CD4-positive, alpha-beta T cell (primary cell): ENCODE measurements at regions of chr12 and their contacts with region 1.

Region 1: DNA sequence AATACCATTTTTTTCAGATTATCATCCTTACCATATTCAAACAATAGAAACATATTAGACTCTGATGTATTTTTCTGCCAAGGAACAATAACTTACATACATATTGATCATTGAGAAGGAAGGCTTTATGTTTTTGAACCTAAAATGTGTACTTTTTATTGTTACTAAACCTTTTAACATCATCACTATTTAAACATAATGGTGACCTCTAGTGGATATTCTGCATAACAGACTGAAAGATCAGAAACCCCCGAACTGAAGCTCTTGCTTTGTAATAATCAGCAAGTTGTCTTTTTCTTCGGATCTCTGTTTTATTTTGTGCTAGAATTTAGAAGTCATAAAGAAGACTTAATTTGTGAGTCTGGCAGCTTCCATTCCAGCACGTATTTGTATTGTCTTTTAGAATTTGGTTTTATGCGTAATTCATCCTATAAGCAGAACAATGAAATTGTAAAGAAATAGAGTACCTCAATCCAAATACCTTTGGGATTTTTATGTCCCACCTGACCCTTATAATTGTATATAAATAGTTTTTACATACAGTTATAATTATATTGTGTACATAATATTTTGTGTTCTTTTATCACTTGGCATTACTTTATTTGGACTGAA is 125.9 kb upstream of the ATF1 start:
- DNase-seq: peak in 3 of 14 experiments; percentile 65 to 66 (median 65)
- ATAC-seq: peak; percentile 82
- H3K4me3 ChIP-seq: no peak overlapping the region
- H3K4me3 Mint-ChIP-seq: no peak overlapping the region
- H3K27ac ChIP-seq: peak overlapping the region in 1 of 2 donors; percentile 14
- H3K27ac Mint-ChIP-seq: peak overlapping the region; percentile 34
- H3K4me1 ChIP-seq: no peaks in the 10 kb centered on the region
- H3K4me1 Mint-ChIP-seq: peaks cover 43% of the 10 kb centered on the region
- H3K27me3 ChIP-seq: no peaks in the 10 kb centered on the region
- H3K27me3 Mint-ChIP-seq: no peaks in the 10 kb centered on the region
- CTCF ChIP-seq: peak; percentile 70

Region 2: GRCh38 chr12:50211392-50212070 is 426.4 kb before region 1 on chr12:
- CTCF ChIA-PET with region 1: no interaction called
- POLR2A ChIA-PET with region 1: no interaction called
- intact Hi-C with region 1: loop called in 1 of 2 experiments (anchors 10 kb)
- DNase-seq: peak in 3 of 14 experiments; percentile 14 to 49 (median 38)
- ATAC-seq: peak; percentile 34
- H3K4me3 ChIP-seq: no peak overlapping the region
- H3K4me3 Mint-ChIP-seq: peak overlapping the region; percentile 47
- H3K27ac ChIP-seq: peak overlapping the region; percentile 51 to 80
- H3K27ac Mint-ChIP-seq: peak overlapping the region; percentile 90
- H3K4me1 ChIP-seq: peaks cover 34% of the 10 kb centered on the region
- H3K4me1 Mint-ChIP-seq: peaks cover 42% of the 10 kb centered on the region
- H3K27me3 ChIP-seq: no peaks in the 10 kb centered on the region
- H3K27me3 Mint-ChIP-seq: no peaks in the 10 kb centered on the region
- CTCF ChIP-seq: no peak

Region 3: DNA sequence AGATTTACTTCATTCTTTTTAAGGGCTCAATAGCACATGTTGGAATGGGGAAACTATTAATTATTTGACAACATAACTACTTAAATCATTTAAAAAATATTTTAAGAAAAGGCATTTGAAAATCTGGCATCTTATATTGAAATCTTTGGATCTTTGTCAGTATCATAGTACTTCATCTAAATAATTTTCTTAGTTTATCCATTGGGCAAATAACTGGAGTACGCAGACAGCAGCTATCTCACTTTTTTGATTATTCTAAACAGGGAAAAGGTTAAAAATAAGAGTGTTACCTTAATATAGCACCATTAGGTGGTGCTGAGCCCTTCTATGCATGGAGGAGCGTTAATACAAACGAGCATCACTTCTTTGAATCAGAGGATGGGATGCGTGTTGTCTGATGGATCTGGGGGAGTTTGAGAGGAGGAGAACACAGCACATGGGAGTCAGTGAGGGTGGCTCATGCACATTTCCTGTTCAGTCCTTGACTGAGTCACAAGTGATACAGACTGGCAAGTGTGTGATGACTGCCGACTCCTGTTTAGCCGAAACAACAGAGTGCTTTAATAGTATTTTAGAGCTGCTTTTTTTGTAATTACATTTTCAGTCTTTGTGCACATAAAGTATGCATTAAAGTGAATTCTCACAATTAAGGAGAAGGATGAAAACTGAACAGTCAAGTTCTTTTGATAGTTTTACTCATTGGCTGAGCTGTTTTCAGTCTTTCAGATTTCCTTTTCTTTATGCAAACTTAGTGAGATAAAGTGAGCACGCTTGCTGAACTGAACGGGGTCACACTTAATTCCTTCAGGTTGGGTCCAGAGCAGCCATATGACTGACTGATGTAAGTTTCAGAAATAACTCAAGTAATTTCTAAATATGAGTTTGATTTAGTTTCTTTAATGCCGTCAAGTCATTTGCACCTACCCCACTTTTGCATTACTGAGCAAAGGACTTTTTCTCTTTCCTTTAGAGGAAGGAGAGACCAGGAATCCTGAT is 40.5 kb before region 1 on chr12:
- CTCF ChIA-PET with region 1: interaction called, 4 read pairs
- POLR2A ChIA-PET with region 1: no interaction called
- intact Hi-C with region 1: loop called in 1 of 2 experiments (anchors 5 kb)
- DNase-seq: peak in 13 of 14 experiments; percentile 16 to 70 (median 32)
- ATAC-seq: peak; percentile 98
- H3K4me3 ChIP-seq: no peak overlapping the region
- H3K4me3 Mint-ChIP-seq: peak overlapping the region; percentile 12
- H3K27ac ChIP-seq: no peak overlapping the region
- H3K27ac Mint-ChIP-seq: peak overlapping the region; percentile 28
- H3K4me1 ChIP-seq: peaks cover 7% of the 10 kb centered on the region
- H3K4me1 Mint-ChIP-seq: peaks cover 57% of the 10 kb centered on the region
- H3K27me3 ChIP-seq: no peaks in the 10 kb centered on the region
- H3K27me3 Mint-ChIP-seq: no peaks in the 10 kb centered on the region
- CTCF ChIP-seq: no peak